Thyroid gland (tissue), 4 donors: ENCODE measurements at regions of chr19 and their contacts with region 1.

Region 1: DNA sequence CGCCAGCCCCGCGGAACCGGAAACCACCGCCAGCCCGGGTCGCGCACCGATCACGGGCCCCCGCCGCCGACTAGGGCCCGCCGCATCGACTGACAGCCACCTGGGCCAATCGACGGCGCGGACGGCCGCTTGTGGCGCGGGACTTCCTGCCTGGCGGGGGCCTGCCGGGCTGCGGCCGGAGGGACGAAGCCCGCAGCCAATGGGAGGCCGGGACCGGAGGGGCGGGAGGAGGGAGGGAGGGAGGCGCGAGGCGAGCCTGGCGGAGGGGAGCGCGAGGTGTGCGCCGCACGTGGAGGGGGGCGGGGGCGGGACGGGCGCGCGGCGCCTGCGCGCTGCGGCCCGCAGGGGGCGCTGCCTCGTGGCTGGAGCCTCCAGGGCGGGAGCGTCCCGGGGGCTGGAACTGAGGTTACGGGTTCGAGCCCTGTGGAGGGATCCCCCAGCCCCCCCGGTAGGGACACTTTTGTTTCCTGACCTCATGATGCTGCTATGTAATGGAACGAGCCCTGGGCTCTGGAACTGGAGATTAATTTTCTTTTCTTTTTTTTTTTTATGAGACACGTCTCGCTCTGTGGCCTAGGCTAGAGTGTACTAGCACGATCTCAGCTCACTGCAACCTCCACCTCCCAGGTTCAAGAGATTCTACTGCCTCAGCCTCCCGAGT is at the start of gene MLLT1:
- DNase-seq: peak; percentile 96
- H3K4me3 ChIP-seq: peak within 1 kb of the TSS; percentile 69 to 93 (median 92)
- H3K27ac ChIP-seq: peak within 1 kb of the TSS; percentile 58 to 78 (median 71)
- H3K4me1 ChIP-seq: peaks cover 15 to 29% of the 10 kb centered on the region in 2 donors
- H3K27me3 ChIP-seq: no peaks in the 10 kb centered on the region
- CTCF ChIP-seq: peak in 5 of 6 experiments; percentile 39 to 90 (median 60)
- POLR2A ChIP-seq: peak in 1 of 2 donors; percentile 56
- total RNA-seq, gene MLLT1: 19.2 to 35.0 (median 26.7) TPM

Region 2: DNA sequence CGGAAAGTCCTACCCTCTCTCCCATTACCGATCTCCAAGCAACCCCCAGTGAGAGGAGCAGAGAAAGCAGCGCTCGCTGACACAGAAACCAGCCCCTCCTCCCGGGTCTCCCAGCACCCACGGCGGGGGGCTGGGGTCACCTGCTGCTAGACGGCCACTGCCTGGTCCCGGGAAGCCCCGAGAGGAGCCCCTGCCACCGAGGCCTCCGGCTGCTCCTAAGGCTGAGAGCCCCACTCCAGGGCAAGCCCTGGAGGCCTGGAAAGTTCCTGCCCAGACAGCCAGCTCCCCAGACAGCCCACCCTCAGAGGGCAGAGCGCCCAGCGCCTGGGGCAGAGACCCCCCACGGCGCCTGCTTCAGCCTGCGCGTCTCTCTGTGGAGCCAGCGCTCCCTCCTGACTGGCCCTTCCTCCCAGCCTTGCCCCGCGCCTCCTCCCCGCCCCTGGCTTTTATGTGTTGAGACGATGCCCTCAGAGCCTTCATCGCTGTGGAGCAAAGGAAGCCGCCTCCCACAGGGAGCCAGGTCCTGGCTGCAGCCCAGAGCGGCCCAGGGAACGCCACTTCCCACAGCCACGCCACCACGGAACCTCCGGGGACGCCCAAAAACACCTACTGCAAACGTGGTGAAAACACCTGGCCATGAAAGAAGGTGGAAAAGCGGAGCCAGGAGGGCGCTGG is 51.4 kb before region 1 on chr19:
- intact Hi-C with region 1: loop called (anchors 5 kb)
- DNase-seq: peak in 1 of 2 donors; percentile 70
- H3K4me3 ChIP-seq: no peak overlapping the region
- H3K27ac ChIP-seq: peak overlapping the region in 1 of 3 donors; percentile 17
- H3K4me1 ChIP-seq: peaks cover 27 to 32% of the 10 kb centered on the region in 2 donors
- H3K27me3 ChIP-seq: no peaks in the 10 kb centered on the region
- CTCF ChIP-seq: no peak
- POLR2A ChIP-seq: no peak